ENCODE measurements at regions of chr5 and their contacts with region 1.

Region 1: GRCh38 chr5:1641560-1642166 is 117.9 kb upstream of the LPCAT1 start:
- DNase-seq: peak; percentile 51 to 81 (median 68)
- H3K4me3 ChIP-seq: no peak overlapping the region
- H3K27ac ChIP-seq: no peak overlapping the region
- H3K4me1 ChIP-seq: peaks cover 2% of the 10 kb centered on the region
- H3K27me3 ChIP-seq: no peaks in the 10 kb centered on the region
- CTCF ChIP-seq: peak in 2 of 3 donors; percentile 54 to 65
- EP300 ChIP-seq: no peak
- POLR2A ChIP-seq: no peak

Region 2: GRCh38 chr5:923281-923873 is 718.3 kb before region 1 on chr5:
- intact Hi-C with region 1: loop called in 1 of 4 experiments (anchors 5 kb)
- DNase-seq: peak; percentile 65 to 86 (median 73)
- H3K4me3 ChIP-seq: no peak overlapping the region
- H3K27ac ChIP-seq: no peak overlapping the region
- H3K4me1 ChIP-seq: no peaks in the 10 kb centered on the region
- H3K27me3 ChIP-seq: no peaks in the 10 kb centered on the region
- CTCF ChIP-seq: peak; percentile 45 to 64 (median 62)
- EP300 ChIP-seq: no peak
- POLR2A ChIP-seq: no peak

Region 3: GRCh38 chr5:1167728-1168709 is 473.6 kb before region 1 on chr5:
- intact Hi-C with region 1: loop called in 2 of 4 experiments (anchors 1 to 2 kb)
- DNase-seq: peak; percentile 62 to 72 (median 70)
- H3K4me3 ChIP-seq: no peak overlapping the region
- H3K27ac ChIP-seq: no peak overlapping the region
- H3K4me1 ChIP-seq: peaks cover 3% of the 10 kb centered on the region
- H3K27me3 ChIP-seq: no peaks in the 10 kb centered on the region
- CTCF ChIP-seq: peak; percentile 14 to 46 (median 46)
- EP300 ChIP-seq: no peak
- POLR2A ChIP-seq: no peak

Region 4: DNA sequence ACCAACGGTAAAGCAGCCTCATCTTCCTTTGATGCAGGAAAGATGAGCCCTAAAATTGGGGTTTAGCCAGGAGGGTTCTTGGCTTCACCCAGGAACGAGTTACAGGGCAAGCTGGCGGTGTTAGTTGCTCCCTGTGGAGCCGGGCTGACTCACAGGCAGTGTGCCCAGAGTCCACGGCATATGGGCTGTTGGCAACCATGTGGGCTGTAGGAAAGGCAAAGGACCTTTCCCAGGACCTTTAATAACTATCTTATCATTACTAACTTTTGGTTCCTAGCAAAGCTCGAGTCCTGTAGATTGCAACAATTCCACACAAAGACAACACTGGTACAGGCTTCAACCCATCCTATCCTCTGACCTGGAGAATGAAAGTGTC is 267.0 kb before region 1 on chr5:
- intact Hi-C with region 1: loop called in 1 of 4 experiments (anchors 10 kb)
- DNase-seq: no peak
- H3K4me3 ChIP-seq: no peak overlapping the region
- H3K27ac ChIP-seq: no peak overlapping the region
- H3K4me1 ChIP-seq: no peaks in the 10 kb centered on the region
- H3K27me3 ChIP-seq: no peaks in the 10 kb centered on the region
- CTCF ChIP-seq: no peak
- EP300 ChIP-seq: no peak
- POLR2A ChIP-seq: no peak

Region 5: GRCh38 chr5:1532384-1532783 is 109.3 kb before region 1 on chr5:
- intact Hi-C with region 1: loop called in 1 of 4 experiments (anchors 2 kb)
- DNase-seq: no peak
- H3K4me3 ChIP-seq: no peak overlapping the region
- H3K27ac ChIP-seq: no peak overlapping the region
- H3K4me1 ChIP-seq: peaks cover 4% of the 10 kb centered on the region
- H3K27me3 ChIP-seq: no peaks in the 10 kb centered on the region
- CTCF ChIP-seq: no peak
- EP300 ChIP-seq: no peak
- POLR2A ChIP-seq: no peak

Region 6: DNA sequence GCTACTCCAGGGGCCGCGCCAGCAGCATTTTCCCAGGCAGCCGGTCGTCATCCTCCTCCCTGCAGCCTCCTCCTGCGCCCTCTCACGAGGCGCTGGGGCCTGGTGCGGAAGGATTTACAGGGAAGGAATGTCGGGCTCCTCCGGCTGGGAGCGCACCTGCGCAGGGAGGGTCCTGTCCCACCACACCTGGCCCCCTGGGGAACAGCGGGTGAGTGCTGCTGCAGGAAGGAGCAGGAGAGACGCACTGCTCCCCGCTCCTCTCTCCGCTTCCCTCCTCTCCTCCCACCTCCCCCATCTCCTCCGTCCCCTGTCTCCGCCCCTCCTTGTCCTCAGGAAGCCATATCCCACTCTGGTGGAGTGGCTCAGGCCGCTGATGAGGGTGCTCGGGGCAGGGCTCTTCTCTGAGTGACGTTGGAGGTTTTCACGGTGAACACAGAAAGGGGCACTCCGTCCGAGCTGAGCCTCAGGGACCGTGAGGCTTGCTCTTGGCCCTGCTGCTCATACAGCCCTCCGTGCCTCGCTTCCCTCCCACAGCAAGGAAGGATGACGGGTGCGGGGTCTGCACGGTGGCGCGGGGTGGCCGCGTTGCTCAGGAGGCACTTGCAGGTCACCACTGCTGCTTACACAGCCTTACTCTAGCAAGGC is 209.7 kb after region 1 on chr5:
- intact Hi-C with region 1: no loop called
- DNase-seq: no peak
- H3K4me3 ChIP-seq: no peak overlapping the region
- H3K27ac ChIP-seq: no peak overlapping the region
- H3K4me1 ChIP-seq: no peaks in the 10 kb centered on the region
- H3K27me3 ChIP-seq: peaks cover 3% of the 10 kb centered on the region
- CTCF ChIP-seq: no peak
- EP300 ChIP-seq: no peak
- POLR2A ChIP-seq: no peak